CD14-positive monocyte (primary cell): ENCODE measurements at regions of chr3 and their contacts with region 1.

Region 1: GRCh38 chr3:139389458-139390209 is at the start of gene COPB2:
- DNase-seq: peak; percentile 98 to 99 (median 99)
- H3K4me3 ChIP-seq: peak within 1 kb of the TSS; percentile 90 to 98 (median 92)
- H3K4me3 Mint-ChIP-seq: peak within 1 kb of the TSS; percentile 89 to 94
- H3K27ac ChIP-seq: peak within 1 kb of the TSS; percentile 88 to 97
- H3K27ac Mint-ChIP-seq: peak within 1 kb of the TSS; percentile 97 to 99 (median 98)
- H3K4me1 ChIP-seq: peaks cover 19 to 26% of the 10 kb centered on the region in 2 donors
- H3K4me1 Mint-ChIP-seq: peaks cover 46% of the 10 kb centered on the region
- H3K27me3 ChIP-seq: no peaks in the 10 kb centered on the region
- H3K27me3 Mint-ChIP-seq: no peaks in the 10 kb centered on the region
- CTCF ChIP-seq: no peak
- polyA plus RNA-seq, gene COPB2: 22.6 to 95.6 (median 76.9) TPM

Region 2: GRCh38 chr3:139346771-139347170 is 42.9 kb before region 1 on chr3:
- intact Hi-C with region 1: loop called in 1 of 2 experiments (anchors 5 kb)
- DNase-seq: no peak
- H3K4me3 ChIP-seq: no peak overlapping the region
- H3K4me3 Mint-ChIP-seq: no peak overlapping the region
- H3K27ac ChIP-seq: no peak overlapping the region
- H3K27ac Mint-ChIP-seq: no peak overlapping the region
- H3K4me1 ChIP-seq: peaks cover 12 to 15% of the 10 kb centered on the region in 2 donors
- H3K4me1 Mint-ChIP-seq: peaks cover 2% of the 10 kb centered on the region
- H3K27me3 ChIP-seq: no peaks in the 10 kb centered on the region
- H3K27me3 Mint-ChIP-seq: no peaks in the 10 kb centered on the region
- CTCF ChIP-seq: no peak

Region 3: GRCh38 chr3:139374099-139374498 is 15.5 kb before region 1 on chr3:
- intact Hi-C with region 1: no loop called
- DNase-seq: no peak
- H3K4me3 ChIP-seq: no peak overlapping the region
- H3K4me3 Mint-ChIP-seq: no peak overlapping the region
- H3K27ac ChIP-seq: no peak overlapping the region
- H3K27ac Mint-ChIP-seq: no peak overlapping the region
- H3K4me1 ChIP-seq: no peaks in the 10 kb centered on the region
- H3K4me1 Mint-ChIP-seq: no peaks in the 10 kb centered on the region
- H3K27me3 ChIP-seq: no peaks in the 10 kb centered on the region
- H3K27me3 Mint-ChIP-seq: no peaks in the 10 kb centered on the region
- CTCF ChIP-seq: no peak

Region 4: GRCh38 chr3:139506766-139507165 is 117.1 kb after region 1 on chr3:
- intact Hi-C with region 1: no loop called
- DNase-seq: no peak
- H3K4me3 ChIP-seq: no peak overlapping the region
- H3K4me3 Mint-ChIP-seq: no peak overlapping the region
- H3K27ac ChIP-seq: no peak overlapping the region
- H3K27ac Mint-ChIP-seq: no peak overlapping the region
- H3K4me1 ChIP-seq: no peaks in the 10 kb centered on the region
- H3K4me1 Mint-ChIP-seq: peaks cover 8% of the 10 kb centered on the region
- H3K27me3 ChIP-seq: no peaks in the 10 kb centered on the region
- H3K27me3 Mint-ChIP-seq: peaks cover 0 to 3% (median 2%) of the 10 kb centered on the region in 3 donors
- CTCF ChIP-seq: no peak